HEK293T (cell line): ENCODE measurements at regions of chr12 and their contacts with region 1.

Region 1: GRCh38 chr12:15220994-15221885 is at the start of gene RERG:
- DNase-seq: peak; percentile 89

Region 2: GRCh38 chr12:15151161-15152120 is 69.8 kb before region 1 on chr12:
- CTCF ChIA-PET with region 1: interaction called, 43 read pairs
- POLR2A ChIA-PET with region 1: interaction called, 10 read pairs
- DNase-seq: no peak

Region 3: GRCh38 chr12:15157269-15157671 is 64.0 kb before region 1 on chr12:
- CTCF ChIA-PET with region 1: interaction called, 43 read pairs
- POLR2A ChIA-PET with region 1: interaction called, 10 read pairs
- DNase-seq: no peak

Region 4: DNA sequence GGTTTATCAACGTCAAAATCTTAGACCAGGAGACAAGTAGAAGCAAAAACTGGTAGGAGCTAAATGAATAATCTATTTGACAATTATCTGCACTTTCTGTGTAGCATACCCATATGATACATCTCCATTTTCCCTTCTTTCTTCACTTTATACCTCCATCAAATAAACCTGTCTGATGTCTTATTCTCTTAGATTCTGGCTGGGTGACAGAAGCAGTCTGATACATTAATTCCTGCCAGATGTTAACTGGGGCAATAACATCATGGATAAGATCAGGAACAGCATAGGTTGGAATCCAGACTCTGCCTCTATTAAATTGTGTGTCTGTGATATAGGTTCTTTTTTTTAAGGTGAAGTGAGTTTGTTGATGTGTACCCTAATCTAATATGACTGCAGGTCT is 11.7 kb after region 1 on chr12:
- CTCF ChIA-PET with region 1: interaction called, 11 read pairs
- POLR2A ChIA-PET with region 1: interaction called, 5 read pairs
- DNase-seq: no peak

Region 5: GRCh38 chr12:15700595-15700994 is 479.4 kb after region 1 on chr12:
- CTCF ChIA-PET with region 1: no interaction called
- POLR2A ChIA-PET with region 1: no interaction called
- DNase-seq: no peak